CD4-positive, alpha-beta T cell (primary cell): ENCODE measurements at regions of chr5 and their contacts with region 1.

Region 1: DNA sequence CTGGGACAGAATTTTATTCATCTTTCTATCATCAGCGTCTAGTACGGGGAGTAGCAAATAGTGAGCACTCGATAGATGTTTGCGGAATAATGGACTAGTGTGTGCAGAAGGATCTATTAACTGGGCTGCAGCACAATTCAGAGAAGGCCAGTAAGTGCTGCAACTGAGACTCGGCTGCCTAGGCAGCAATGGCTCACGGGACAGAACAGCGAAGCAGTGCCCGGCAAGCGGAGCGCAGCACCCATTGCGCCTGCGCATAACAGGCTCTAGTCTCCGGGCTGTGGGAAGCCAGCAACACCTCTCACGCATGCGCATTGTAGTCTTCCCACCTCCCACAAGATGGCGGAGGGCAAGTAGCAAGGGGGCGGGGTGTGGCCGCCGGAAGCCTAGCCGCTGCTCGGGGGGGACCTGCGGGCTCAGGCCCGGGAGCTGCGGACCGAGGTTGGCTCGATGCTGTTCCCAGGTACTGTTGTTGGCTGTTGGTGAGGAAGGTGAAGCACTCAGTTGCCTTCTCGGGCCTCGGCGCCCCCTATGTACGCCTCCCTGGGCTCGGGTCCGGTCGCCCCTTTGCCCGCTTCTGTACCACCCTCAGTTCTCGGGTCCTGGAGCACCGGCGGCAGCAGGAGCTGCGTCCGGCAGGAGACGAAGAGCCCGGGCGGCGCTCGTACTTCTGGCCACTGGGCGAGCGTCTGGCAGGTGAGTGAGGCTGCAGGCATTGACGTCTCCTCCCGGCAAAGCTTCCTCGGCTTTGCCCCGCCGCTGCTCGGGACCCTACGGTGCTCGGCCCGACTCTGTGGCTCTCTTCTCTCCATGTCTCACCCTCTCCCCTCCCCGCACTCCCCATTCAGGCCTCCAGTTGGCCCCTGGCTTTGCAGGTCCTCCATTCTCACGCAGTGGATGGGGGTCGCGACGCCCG is 30.2 kb upstream of the APC start:
- DNase-seq: peak; percentile 88 to 99 (median 96)
- ATAC-seq: peak; percentile 93
- H3K4me3 ChIP-seq: peak overlapping the region; percentile 87
- H3K4me3 Mint-ChIP-seq: peak overlapping the region; percentile 94
- H3K27ac ChIP-seq: peak overlapping the region; percentile 65 to 82
- H3K27ac Mint-ChIP-seq: peak overlapping the region; percentile 83
- H3K4me1 ChIP-seq: peaks cover 39% of the 10 kb centered on the region
- H3K4me1 Mint-ChIP-seq: peaks cover 62% of the 10 kb centered on the region
- H3K27me3 ChIP-seq: no peaks in the 10 kb centered on the region
- H3K27me3 Mint-ChIP-seq: no peaks in the 10 kb centered on the region
- CTCF ChIP-seq: no peak

Region 2: GRCh38 chr5:111757355-111758283 is 949.8 kb before region 1 on chr5:
- CTCF ChIA-PET with region 1: no interaction called
- POLR2A ChIA-PET with region 1: no interaction called
- intact Hi-C with region 1: loop called in 1 of 2 experiments (anchors 10 kb)
- DNase-seq: peak; percentile 46 to 87 (median 75)
- ATAC-seq: peak; percentile 79
- H3K4me3 ChIP-seq: peak overlapping the region; percentile 67
- H3K4me3 Mint-ChIP-seq: peak overlapping the region; percentile 94
- H3K27ac ChIP-seq: peak overlapping the region in 1 of 2 donors; percentile 16
- H3K27ac Mint-ChIP-seq: peak overlapping the region; percentile 79
- H3K4me1 ChIP-seq: peaks cover 5% of the 10 kb centered on the region
- H3K4me1 Mint-ChIP-seq: peaks cover 28% of the 10 kb centered on the region
- H3K27me3 ChIP-seq: no peaks in the 10 kb centered on the region
- H3K27me3 Mint-ChIP-seq: no peaks in the 10 kb centered on the region
- CTCF ChIP-seq: no peak

Region 3: GRCh38 chr5:112635771-112636731 is 71.4 kb before region 1 on chr5:
- CTCF ChIA-PET with region 1: no interaction called
- POLR2A ChIA-PET with region 1: no interaction called
- intact Hi-C with region 1: no loop called
- DNase-seq: no peak
- ATAC-seq: no peak
- H3K4me3 ChIP-seq: no peak overlapping the region
- H3K4me3 Mint-ChIP-seq: no peak overlapping the region
- H3K27ac ChIP-seq: no peak overlapping the region
- H3K27ac Mint-ChIP-seq: no peak overlapping the region
- H3K4me1 ChIP-seq: no peaks in the 10 kb centered on the region
- H3K4me1 Mint-ChIP-seq: no peaks in the 10 kb centered on the region
- H3K27me3 ChIP-seq: no peaks in the 10 kb centered on the region
- H3K27me3 Mint-ChIP-seq: peaks cover 28% of the 10 kb centered on the region
- CTCF ChIP-seq: no peak

Region 4: GRCh38 chr5:112737463-112738190 is 30.2 kb after region 1 on chr5 and contains the start of gene APC:
- CTCF ChIA-PET with region 1: interaction called, 3 read pairs
- POLR2A ChIA-PET with region 1: interaction called, 21 read pairs
- intact Hi-C with region 1: loop called in 1 of 2 experiments (anchors 5 kb)
- DNase-seq: peak; percentile 36 to 87 (median 64)
- ATAC-seq: peak; percentile 95
- H3K4me3 ChIP-seq: peak within 1 kb of the TSS; percentile 69
- H3K4me3 Mint-ChIP-seq: peak within 1 kb of the TSS; percentile 94
- H3K27ac ChIP-seq: no peak within 1 kb of the TSS
- H3K27ac Mint-ChIP-seq: peak within 1 kb of the TSS; percentile 31
- H3K4me1 ChIP-seq: peaks cover 12% of the 10 kb centered on the region
- H3K4me1 Mint-ChIP-seq: peaks cover 52% of the 10 kb centered on the region
- H3K27me3 ChIP-seq: no peaks in the 10 kb centered on the region
- H3K27me3 Mint-ChIP-seq: no peaks in the 10 kb centered on the region
- CTCF ChIP-seq: no peak
- total RNA-seq, gene APC: 21.8 to 22.8 TPM

Region 5: DNA sequence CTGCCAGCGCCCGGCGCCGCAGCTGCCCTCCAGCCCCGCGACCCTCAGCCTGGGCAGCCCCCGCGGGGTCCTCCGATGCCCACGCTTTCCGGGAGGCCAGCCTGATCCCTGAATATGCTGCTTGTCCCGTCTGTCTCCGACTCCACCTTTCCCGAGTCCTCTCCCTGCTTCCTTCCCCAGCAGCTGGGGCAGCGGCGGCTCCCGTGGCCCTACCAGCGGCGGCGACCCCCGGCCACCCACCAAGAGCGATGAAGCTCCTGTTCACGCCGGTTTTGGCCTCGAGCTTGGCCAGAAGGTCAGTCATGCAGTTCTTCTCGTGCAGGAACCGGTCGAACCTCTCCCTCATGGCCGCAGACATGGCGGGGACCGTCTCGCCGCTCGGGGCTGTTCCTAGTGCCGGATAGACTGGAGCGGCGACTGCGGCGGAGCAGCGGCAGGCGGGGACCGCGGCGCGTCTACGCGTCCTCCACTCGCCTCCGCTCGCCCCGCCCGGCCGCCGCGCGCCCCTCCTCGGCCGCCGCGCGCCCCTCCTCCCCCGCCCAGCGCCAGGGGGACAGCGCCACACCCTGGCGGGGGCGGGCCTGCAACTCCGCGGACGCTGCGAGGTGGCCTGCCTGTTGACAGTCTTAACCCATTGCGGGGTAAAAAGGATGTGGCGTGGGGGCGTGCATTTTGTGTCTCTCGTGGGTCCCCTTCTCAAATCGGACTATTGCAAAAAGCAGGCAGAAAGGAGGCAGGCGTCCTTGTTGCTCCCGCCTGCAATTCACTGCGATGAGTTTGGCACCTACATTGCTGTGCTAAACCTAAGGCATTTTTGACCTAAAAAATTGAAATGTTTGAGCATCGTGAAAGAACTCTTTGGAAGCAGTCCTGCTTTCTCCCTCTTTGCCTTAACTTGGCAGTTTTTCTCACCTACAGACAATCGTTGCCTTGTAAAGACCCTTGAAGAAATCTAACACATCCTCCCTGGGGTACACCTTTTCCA is 214.7 kb after region 1 on chr5 and contains the start of gene REEP5:
- CTCF ChIA-PET with region 1: interaction called, 3 read pairs
- POLR2A ChIA-PET with region 1: interaction called, 6 read pairs
- intact Hi-C with region 1: loop called in 1 of 2 experiments (anchors 5 kb)
- DNase-seq: peak; percentile 64 to 95 (median 82)
- ATAC-seq: peak; percentile 69
- H3K4me3 ChIP-seq: peak within 1 kb of the TSS; percentile 94
- H3K4me3 Mint-ChIP-seq: peak within 1 kb of the TSS; percentile 90
- H3K27ac ChIP-seq: peak within 1 kb of the TSS; percentile 80 to 87
- H3K27ac Mint-ChIP-seq: peak within 1 kb of the TSS; percentile 87
- H3K4me1 ChIP-seq: peaks cover 57% of the 10 kb centered on the region
- H3K4me1 Mint-ChIP-seq: peaks cover 63% of the 10 kb centered on the region
- H3K27me3 ChIP-seq: no peaks in the 10 kb centered on the region
- H3K27me3 Mint-ChIP-seq: no peaks in the 10 kb centered on the region
- CTCF ChIP-seq: peak; percentile 35
- total RNA-seq, gene REEP5: 25.3 to 26.6 TPM

Region 6: GRCh38 chr5:113519412-113519811 is 812.0 kb after region 1 on chr5:
- CTCF ChIA-PET with region 1: no interaction called
- POLR2A ChIA-PET with region 1: no interaction called
- intact Hi-C with region 1: loop called in 1 of 2 experiments (anchors 5 kb)
- DNase-seq: no peak
- ATAC-seq: no peak
- H3K4me3 ChIP-seq: no peak overlapping the region
- H3K4me3 Mint-ChIP-seq: no peak overlapping the region
- H3K27ac ChIP-seq: no peak overlapping the region
- H3K27ac Mint-ChIP-seq: no peak overlapping the region
- H3K4me1 ChIP-seq: peaks cover 4% of the 10 kb centered on the region
- H3K4me1 Mint-ChIP-seq: peaks cover 73% of the 10 kb centered on the region
- H3K27me3 ChIP-seq: no peaks in the 10 kb centered on the region
- H3K27me3 Mint-ChIP-seq: no peaks in the 10 kb centered on the region
- CTCF ChIP-seq: no peak